Naive thymus-derived CD4-positive, alpha-beta T cell (primary cell): ENCODE measurements at regions of chr11 and their contacts with region 1.

Region 1: GRCh38 chr11:35178873-35179272 is 39.9 kb downstream of the CD44 start:
- DNase-seq: no peak
- ATAC-seq: no peak
- H3K4me3 ChIP-seq: no peak overlapping the region
- H3K4me3 Mint-ChIP-seq: peak overlapping the region in 9 of 10 donors; percentile 44 to 77 (median 59)
- H3K27ac ChIP-seq: peak overlapping the region; percentile 65
- H3K27ac Mint-ChIP-seq: peak overlapping the region; percentile 85 to 100 (median 94)
- H3K4me1 ChIP-seq: peaks cover 84 to 89% of the 10 kb centered on the region in 2 donors
- H3K4me1 Mint-ChIP-seq: peaks cover 62 to 93% (median 91%) of the 10 kb centered on the region in 7 donors
- H3K27me3 ChIP-seq: no peaks in the 10 kb centered on the region
- H3K27me3 Mint-ChIP-seq: no peaks in the 10 kb centered on the region

Region 2: GRCh38 chr11:35040221-35040942 is 138.5 kb before region 1 on chr11:
- CTCF ChIA-PET with region 1: no interaction called
- POLR2A ChIA-PET with region 1: interaction called, 4 read pairs
- intact Hi-C with region 1: loop called (anchors 1 kb)
- DNase-seq: peak in 8 of 9 donors; percentile 53 to 89 (median 74)
- ATAC-seq: peak; percentile 88
- H3K4me3 ChIP-seq: peak overlapping the region; percentile 60
- H3K4me3 Mint-ChIP-seq: peak overlapping the region; percentile 74 to 94 (median 89)
- H3K27ac ChIP-seq: peak overlapping the region; percentile 86
- H3K27ac Mint-ChIP-seq: peak overlapping the region; percentile 90 to 99 (median 97)
- H3K4me1 ChIP-seq: peaks cover 29 to 45% of the 10 kb centered on the region in 2 donors
- H3K4me1 Mint-ChIP-seq: peaks cover 28 to 77% (median 68%) of the 10 kb centered on the region in 7 donors
- H3K27me3 ChIP-seq: no peaks in the 10 kb centered on the region
- H3K27me3 Mint-ChIP-seq: peaks cover 0 to 29% (median 0%) of the 10 kb centered on the region in 5 donors

Region 3: GRCh38 chr11:35151241-35151640 is 27.6 kb before region 1 on chr11:
- CTCF ChIA-PET with region 1: interaction called, 4 read pairs
- POLR2A ChIA-PET with region 1: interaction called, 354 read pairs
- intact Hi-C with region 1: no loop called
- DNase-seq: no peak
- ATAC-seq: peak; percentile 5
- H3K4me3 ChIP-seq: peak overlapping the region; percentile 8
- H3K4me3 Mint-ChIP-seq: peak overlapping the region in 9 of 10 donors; percentile 46 to 94 (median 61)
- H3K27ac ChIP-seq: peak overlapping the region; percentile 65
- H3K27ac Mint-ChIP-seq: peak overlapping the region; percentile 58 to 100 (median 89)
- H3K4me1 ChIP-seq: peaks cover 99 to 100% of the 10 kb centered on the region in 2 donors
- H3K4me1 Mint-ChIP-seq: peaks cover 74 to 100% (median 99%) of the 10 kb centered on the region in 7 donors
- H3K27me3 ChIP-seq: no peaks in the 10 kb centered on the region
- H3K27me3 Mint-ChIP-seq: no peaks in the 10 kb centered on the region

Region 4: GRCh38 chr11:35192347-35192746 is 13.5 kb after region 1 on chr11:
- CTCF ChIA-PET with region 1: interaction called, 3 read pairs
- POLR2A ChIA-PET with region 1: interaction called, 14 read pairs
- intact Hi-C with region 1: loop called in 1 of 2 experiments (anchors 2 kb)
- DNase-seq: no peak
- ATAC-seq: no peak
- H3K4me3 ChIP-seq: no peak overlapping the region
- H3K4me3 Mint-ChIP-seq: peak overlapping the region in 5 of 10 donors; percentile 8 to 61 (median 24)
- H3K27ac ChIP-seq: peak overlapping the region; percentile 0
- H3K27ac Mint-ChIP-seq: peak overlapping the region in 8 of 9 donors; percentile 55 to 89 (median 75)
- H3K4me1 ChIP-seq: peaks cover 12 to 51% of the 10 kb centered on the region in 2 donors
- H3K4me1 Mint-ChIP-seq: peaks cover 37 to 100% (median 97%) of the 10 kb centered on the region in 7 donors
- H3K27me3 ChIP-seq: no peaks in the 10 kb centered on the region
- H3K27me3 Mint-ChIP-seq: no peaks in the 10 kb centered on the region

Region 5: GRCh38 chr11:35295839-35296238 is 117.0 kb after region 1 on chr11:
- CTCF ChIA-PET with region 1: no interaction called
- POLR2A ChIA-PET with region 1: no interaction called
- intact Hi-C with region 1: no loop called
- DNase-seq: no peak
- ATAC-seq: no peak
- H3K4me3 ChIP-seq: no peak overlapping the region
- H3K4me3 Mint-ChIP-seq: no peak overlapping the region
- H3K27ac ChIP-seq: no peak overlapping the region
- H3K27ac Mint-ChIP-seq: no peak overlapping the region
- H3K4me1 ChIP-seq: peaks cover 0 to 9% of the 10 kb centered on the region in 2 donors
- H3K4me1 Mint-ChIP-seq: peaks cover 8 to 36% (median 17%) of the 10 kb centered on the region in 7 donors
- H3K27me3 ChIP-seq: no peaks in the 10 kb centered on the region
- H3K27me3 Mint-ChIP-seq: peaks cover 0 to 20% (median 0%) of the 10 kb centered on the region in 5 donors